Kidney (tissue), 22 donors: ENCODE measurements at regions of chr11 and their contacts with region 1.

Region 1: GRCh38 chr11:554824-555472 is 5.6 kb downstream of the LMNTD2 start:
- DNase-seq: peak; percentile 69 to 92 (median 86)
- H3K4me3 ChIP-seq: peak overlapping the region in 1 of 3 donors; percentile 41
- H3K27ac ChIP-seq: no peak overlapping the region
- H3K4me1 ChIP-seq: peaks cover 0 to 15% (median 6%) of the 10 kb centered on the region in 3 donors
- H3K27me3 ChIP-seq: no peaks in the 10 kb centered on the region
- CTCF ChIP-seq: peak; percentile 93

Region 2: GRCh38 chr11:727859-728748 is 173.2 kb after region 1 on chr11:
- intact Hi-C with region 1: loop called (anchors 10 kb)
- DNase-seq: peak; percentile 82 to 96 (median 90)
- H3K4me3 ChIP-seq: no peak overlapping the region
- H3K27ac ChIP-seq: peak overlapping the region; percentile 53 to 76
- H3K4me1 ChIP-seq: peaks cover 0 to 5% (median 0%) of the 10 kb centered on the region in 3 donors
- H3K27me3 ChIP-seq: no peaks in the 10 kb centered on the region
- CTCF ChIP-seq: peak; percentile 98

Region 3: DNA sequence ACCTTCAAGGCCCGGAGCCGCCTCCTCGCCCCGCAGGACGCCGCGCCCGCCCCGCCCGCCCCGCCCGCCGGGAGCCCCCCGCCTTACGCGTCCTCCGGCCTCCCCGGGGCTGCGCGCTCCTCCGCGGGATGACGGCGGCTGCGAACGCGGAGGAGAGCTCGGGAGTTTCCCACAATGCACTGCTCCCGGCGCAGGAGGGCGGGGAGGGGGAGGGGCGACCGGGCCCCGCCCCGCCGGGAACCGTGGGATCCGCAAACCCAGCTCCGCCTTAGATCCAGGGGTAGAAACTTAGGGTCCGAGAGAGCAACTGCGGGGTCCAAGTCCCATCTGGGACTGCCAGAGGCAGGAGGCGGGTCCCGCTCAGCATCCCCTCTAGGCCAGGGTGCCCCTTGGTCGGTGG is 235.0 kb after region 1 on chr11 and contains the start of gene CEND1:
- intact Hi-C with region 1: no loop called
- DNase-seq: peak in 2 of 5 donors; percentile 42 to 73
- H3K4me3 ChIP-seq: no peak within 1 kb of the TSS
- H3K27ac ChIP-seq: no peak within 1 kb of the TSS
- H3K4me1 ChIP-seq: peaks cover 0 to 5% (median 0%) of the 10 kb centered on the region in 3 donors
- H3K27me3 ChIP-seq: no peaks in the 10 kb centered on the region
- CTCF ChIP-seq: no peak
- total RNA-seq, gene CEND1: 0.16 TPM